ENCODE measurements at regions of chr6 and their contacts with region 1.

Region 1: DNA sequence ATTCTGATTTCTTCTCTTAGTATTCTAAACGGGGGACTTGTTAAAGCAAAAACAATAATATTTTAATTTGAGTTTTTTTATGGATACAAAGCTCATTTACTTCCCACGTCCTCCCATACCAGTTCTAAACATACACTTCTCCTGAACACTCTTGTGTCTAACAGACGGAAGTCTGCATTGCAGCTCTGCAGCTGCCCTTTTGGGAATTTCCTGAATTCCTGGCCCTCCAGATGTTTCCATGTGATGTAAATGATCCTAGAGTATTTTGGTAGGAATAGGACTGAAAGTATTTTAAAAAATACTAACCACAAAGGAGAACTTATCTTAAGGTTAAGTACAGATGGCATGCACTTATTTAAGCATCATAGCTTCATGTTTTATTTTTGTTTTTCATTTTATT is 886.7 kb downstream of the TBC1D32 start:
- DNase-seq: no peak
- H3K4me3 ChIP-seq: no peak overlapping the region
- CTCF ChIP-seq: no peak
- POLR2A ChIP-seq: no peak

Region 2: DNA sequence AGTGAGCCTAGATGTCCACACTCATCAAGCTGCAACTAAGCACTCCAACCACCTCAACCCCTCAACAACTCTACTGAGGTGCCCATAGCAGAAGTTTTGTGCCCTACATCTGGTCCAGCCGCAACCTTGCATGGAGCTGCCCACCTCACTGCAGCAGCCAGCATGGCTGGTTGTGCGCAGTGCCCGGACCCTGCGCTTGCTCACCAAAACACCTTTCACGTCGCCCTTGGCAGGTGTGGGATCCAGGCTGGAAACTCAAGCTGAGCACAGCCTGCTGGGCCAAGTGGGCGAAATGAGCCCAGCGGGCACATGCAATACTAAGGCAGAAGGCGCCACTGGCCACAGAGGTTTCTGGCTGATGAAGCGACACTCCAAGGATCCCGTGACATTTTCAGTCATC is 15.8 kb before region 1 on chr6:
- intact Hi-C with region 1: loop called (anchors 2 kb)
- DNase-seq: no peak
- H3K4me3 ChIP-seq: no peak overlapping the region
- CTCF ChIP-seq: no peak
- POLR2A ChIP-seq: no peak

Region 3: GRCh38 chr6:122033539-122034181 is 1586.1 kb after region 1 on chr6:
- intact Hi-C with region 1: no loop called
- DNase-seq: no peak
- H3K4me3 ChIP-seq: no peak overlapping the region
- CTCF ChIP-seq: no peak
- POLR2A ChIP-seq: no peak